Activated T-helper 1 cell treated with anti-CD3 and anti-CD28 coated beads, Interleukin-12 subunit alpha, Interleukin-12 subunit beta, Interleukin-2, Interleukin-4 antibody, amounts not matched to agents 30 ng/mL and 10 ng/mL and 1 ng/mL, durations not matched to agents 14 hours and 24 hours and 36 hours (primary cell): ENCODE measurements at regions of chr14 and their contacts with region 1.

Region 1: DNA sequence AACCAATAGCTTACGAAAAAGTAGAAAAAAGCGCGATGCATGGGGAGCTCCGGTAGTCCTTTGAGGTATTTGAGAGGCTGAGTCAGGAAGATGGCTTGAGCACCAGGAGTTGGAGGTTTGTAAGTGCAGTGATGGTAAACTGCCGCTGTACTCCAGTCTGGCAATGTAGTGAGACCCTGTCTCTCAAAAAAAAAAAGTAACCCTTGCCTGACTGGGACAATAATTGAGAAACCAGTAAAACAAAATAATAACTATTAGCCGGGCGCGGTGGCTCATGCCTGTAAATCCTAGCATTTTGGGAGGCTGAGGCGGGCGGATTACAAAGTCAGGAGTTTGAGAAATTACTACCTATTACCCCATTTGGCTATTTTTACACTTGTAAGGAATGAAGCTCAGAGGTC is 632 bp upstream of the ACOT2 start:
- DNase-seq: no peak
- H3K4me3 Mint-ChIP-seq: peak overlapping the region; percentile 92
- H3K27ac Mint-ChIP-seq: peak overlapping the region; percentile 97
- H3K4me1 Mint-ChIP-seq: peaks cover 39% of the 10 kb centered on the region
- H3K27me3 Mint-ChIP-seq: no peaks in the 10 kb centered on the region

Region 2: DNA sequence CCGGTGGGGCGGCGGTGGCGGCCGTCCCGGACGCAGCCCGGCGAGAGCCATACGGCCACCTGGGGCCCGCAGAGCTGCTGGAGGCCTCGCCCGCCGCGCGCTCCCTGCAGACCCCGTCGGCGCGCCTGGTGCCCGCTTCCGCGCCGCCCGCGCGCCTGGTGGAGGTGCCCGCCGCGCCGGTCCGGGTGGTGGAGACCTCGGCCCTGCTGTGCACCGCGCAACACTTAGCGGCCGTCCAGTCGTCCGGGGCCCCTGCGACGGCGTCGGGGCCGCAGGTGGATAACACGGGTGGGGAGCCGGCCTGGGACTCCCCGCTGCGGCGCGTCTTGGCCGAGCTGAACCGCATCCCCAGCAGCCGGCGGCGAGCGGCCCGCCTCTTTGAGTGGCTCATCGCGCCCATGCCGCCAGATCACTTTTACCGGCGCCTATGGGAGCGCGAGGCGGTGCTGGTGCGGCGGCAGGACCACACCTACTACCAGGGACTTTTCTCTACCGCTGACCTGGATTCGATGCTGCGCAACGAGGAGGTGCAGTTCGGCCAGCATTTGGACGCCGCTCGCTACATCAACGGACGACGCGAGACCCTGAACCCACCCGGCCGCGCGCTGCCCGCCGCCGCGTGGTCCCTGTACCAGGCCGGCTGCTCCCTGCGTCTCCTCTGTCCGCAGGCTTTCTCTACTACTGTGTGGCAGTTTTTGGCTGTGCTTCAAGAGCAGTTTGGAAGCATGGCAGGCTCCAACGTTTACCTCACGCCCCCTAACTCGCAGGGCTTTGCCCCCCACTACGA is 76.9 kb before region 1 on chr14:
- intact Hi-C with region 1: loop called (anchors 1 kb)
- DNase-seq: peak; percentile 75
- H3K4me3 Mint-ChIP-seq: peak overlapping the region; percentile 86
- H3K27ac Mint-ChIP-seq: peak overlapping the region; percentile 86
- H3K4me1 Mint-ChIP-seq: peaks cover 52% of the 10 kb centered on the region
- H3K27me3 Mint-ChIP-seq: peaks cover 5% of the 10 kb centered on the region

Region 3: DNA sequence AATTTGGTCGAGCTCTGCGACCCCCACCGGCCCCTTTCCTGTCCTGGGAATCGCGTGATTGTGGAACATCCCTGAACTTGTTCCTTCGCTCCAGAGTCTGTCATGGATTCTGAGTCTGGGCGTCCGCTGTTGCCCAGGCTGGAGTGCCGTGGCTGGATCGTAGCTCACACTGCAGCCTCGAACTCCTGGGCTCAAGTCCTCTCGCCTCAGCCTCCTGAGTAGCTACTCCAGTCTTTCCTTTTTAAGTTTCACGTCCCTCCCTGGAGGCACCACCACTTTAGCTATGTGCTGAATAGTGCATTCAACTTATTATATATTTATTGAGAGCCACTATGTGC is 44.6 kb after region 1 on chr14:
- intact Hi-C with region 1: loop called (anchors 1 kb)
- DNase-seq: no peak
- H3K4me3 Mint-ChIP-seq: peak overlapping the region; percentile 83
- H3K27ac Mint-ChIP-seq: peak overlapping the region; percentile 52
- H3K4me1 Mint-ChIP-seq: peaks cover 5% of the 10 kb centered on the region
- H3K27me3 Mint-ChIP-seq: peaks cover 7% of the 10 kb centered on the region

Region 4: DNA sequence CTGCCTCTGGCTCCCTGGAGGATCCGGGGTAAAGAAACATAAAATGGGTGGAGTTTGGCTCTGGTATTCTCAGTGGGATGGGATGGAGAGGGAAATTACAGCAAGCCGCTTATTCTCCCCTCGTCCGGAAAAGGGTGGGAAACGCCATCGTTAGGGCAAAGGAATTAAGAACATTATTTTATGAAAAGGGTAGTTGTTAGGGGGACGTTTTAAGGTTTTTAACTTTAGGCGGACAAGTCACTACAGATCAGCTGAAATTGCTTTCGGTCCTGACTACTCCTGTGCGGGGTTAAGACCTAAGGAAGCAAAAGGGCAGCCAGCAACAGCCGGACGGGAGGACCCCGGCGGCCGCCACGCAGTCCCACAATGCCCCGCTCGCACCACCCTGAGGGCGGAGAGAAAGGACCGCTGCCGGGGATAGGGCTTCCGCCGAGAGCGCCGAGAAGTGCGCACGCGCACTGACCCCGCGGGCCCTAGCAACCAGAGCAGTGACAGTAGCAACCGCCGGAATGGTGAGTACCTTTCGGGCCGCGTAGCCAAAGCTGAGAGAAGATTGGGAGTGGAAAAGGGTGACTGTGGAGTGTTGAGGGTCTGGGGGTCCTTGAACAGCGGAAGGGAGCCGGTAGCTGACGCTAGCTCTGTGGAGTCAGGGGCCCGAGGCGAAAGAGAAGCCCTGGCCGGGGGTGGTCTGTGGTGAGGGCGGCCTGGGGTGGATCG is 76.3 kb after region 1 on chr14 and contains the start of gene DNAL1:
- intact Hi-C with region 1: loop called (anchors 1 kb)
- DNase-seq: peak; percentile 92
- H3K4me3 Mint-ChIP-seq: peak within 1 kb of the TSS; percentile 86
- H3K27ac Mint-ChIP-seq: peak within 1 kb of the TSS; percentile 71
- H3K4me1 Mint-ChIP-seq: peaks cover 15% of the 10 kb centered on the region
- H3K27me3 Mint-ChIP-seq: no peaks in the 10 kb centered on the region
- total RNA-seq, gene DNAL1: 5.3 and 8.5 TPM in 2 replicates

Region 5: GRCh38 chr14:73851644-73852382 is 283.4 kb after region 1 on chr14 and contains the start of gene PTGR2:
- intact Hi-C with region 1: loop called (anchors 5 kb)
- DNase-seq: peak; percentile 82
- H3K4me3 Mint-ChIP-seq: peak within 1 kb of the TSS; percentile 91
- H3K27ac Mint-ChIP-seq: peak within 1 kb of the TSS; percentile 92
- H3K4me1 Mint-ChIP-seq: peaks cover 20% of the 10 kb centered on the region
- H3K27me3 Mint-ChIP-seq: peaks cover 3% of the 10 kb centered on the region
- total RNA-seq, gene PTGR2: 1.2 and 2.0 TPM in 2 replicates